ENCODE measurements at regions of chr17 and their contacts with region 1.

Region 1: DNA sequence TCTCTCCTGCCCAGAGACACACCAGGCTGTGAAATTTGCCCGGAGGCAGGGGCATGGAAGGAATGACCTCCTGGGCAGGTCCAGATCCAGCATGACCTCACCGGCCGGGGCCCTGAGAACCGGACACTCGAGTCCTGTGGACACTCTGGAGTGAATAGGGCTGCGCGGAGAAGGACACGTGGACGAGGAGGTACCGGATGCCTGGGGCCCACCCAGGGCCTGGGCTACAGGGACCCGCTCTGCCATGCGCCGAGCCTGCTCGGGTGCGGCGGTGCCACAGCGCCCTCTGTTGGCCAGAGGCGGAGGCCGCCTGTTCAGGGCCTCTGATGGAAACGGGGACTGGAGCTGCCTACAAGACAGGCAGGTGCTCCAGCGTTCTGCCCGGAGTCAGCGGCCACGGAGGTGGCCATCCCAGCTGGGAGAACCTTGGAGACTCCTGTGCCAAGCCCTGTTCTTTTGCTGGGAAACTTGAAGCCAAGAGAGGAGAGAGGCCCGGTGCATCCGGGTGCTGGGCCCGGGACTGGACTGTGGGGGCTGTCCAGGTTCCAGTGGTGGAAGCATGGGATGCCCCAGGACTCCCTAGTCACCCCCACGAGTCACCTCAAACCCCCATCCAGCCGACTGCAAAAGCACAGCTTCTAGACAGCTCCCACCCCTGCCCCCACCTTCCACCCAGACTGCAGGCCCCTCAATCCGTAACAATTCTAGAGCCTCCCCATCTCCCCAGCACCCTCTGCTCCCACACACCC is 19.3 kb upstream of the NXPH3 start:
- DNase-seq: peak; percentile 98
- H3K4me3 ChIP-seq: no peak overlapping the region
- H3K27ac ChIP-seq: no peak overlapping the region
- H3K4me1 ChIP-seq: peaks cover 0 to 8% of the 10 kb centered on the region in 2 experiments; a peak in 1 of 4 replicates
- H3K27me3 ChIP-seq: peaks cover 20% of the 10 kb centered on the region; the same call in 1 of the 2 replicates
- CTCF ChIP-seq: peak; percentile 100
- EP300 ChIP-seq: no peak
- RAD21 ChIP-seq: peak; percentile 99

Region 2: DNA sequence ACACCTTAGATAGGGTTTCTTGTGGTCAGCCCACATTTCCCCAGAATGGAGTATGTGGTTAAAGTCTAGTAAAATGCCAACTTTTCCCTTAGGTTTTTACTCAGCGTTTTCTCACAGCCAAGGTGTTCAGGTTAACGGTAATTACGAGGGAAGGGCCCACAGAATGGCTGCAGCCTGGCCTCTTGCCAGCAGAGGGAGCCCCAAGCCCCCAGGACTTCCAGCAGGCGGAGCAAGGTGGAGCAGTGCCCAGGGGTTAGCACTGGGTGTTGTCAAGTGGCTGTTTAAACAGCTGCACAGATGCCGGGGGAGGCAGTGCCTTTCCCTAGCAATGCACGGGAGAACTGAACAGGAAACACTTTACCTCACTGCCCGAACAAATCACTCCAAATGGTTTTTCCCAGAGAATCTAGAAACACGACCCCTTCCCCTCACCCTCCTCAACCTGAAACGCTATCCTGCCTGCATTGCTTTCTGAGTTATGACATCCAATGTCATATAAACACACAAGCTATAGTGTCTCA is 148.4 kb before region 1 on chr17:
- CTCF ChIA-PET with region 1: interaction called, 496 read pairs
- POLR2A ChIA-PET with region 1: interaction called, 4 read pairs
- DNase-seq: peak; percentile 92
- H3K4me3 ChIP-seq: peak overlapping the region in 1 of 2 experiments; percentile 27; a peak in 1 of 4 replicates
- H3K27ac ChIP-seq: no peak overlapping the region
- H3K4me1 ChIP-seq: peaks cover 0 to 4% of the 10 kb centered on the region in 2 experiments; a peak in 1 of 4 replicates
- H3K27me3 ChIP-seq: no peaks in the 10 kb centered on the region
- CTCF ChIP-seq: peak; percentile 100
- EP300 ChIP-seq: no peak
- RAD21 ChIP-seq: peak; percentile 86

Region 3: DNA sequence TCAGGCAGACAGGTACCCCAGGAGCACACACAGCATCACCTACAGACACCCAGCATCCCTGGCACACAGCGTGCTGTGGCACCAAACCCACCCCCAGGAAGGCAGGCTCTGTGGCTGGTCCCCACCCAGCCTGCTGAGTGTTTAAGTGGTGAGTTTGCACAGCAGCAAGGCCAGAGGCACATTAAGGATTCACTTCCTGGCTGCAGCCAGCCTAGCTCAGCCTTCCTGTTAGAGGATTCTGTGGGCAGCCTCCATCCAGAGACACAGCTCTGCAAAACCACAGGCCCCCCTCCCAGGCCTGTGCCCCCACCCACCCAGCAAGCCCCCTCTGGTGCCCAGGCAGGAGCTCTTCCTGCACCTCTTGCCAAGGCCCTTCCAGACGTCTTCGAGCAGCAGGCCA is 105.7 kb before region 1 on chr17:
- CTCF ChIA-PET with region 1: interaction called, 55 read pairs
- POLR2A ChIA-PET with region 1: no interaction called
- DNase-seq: no peak
- H3K4me3 ChIP-seq: no peak overlapping the region
- H3K27ac ChIP-seq: peak overlapping the region in 1 of 2 experiments; percentile 20; a peak in 1 of 4 replicates
- H3K4me1 ChIP-seq: peaks cover 18 to 19% of the 10 kb centered on the region in 2 experiments; a peak in 3 of 4 replicates
- H3K27me3 ChIP-seq: no peaks in the 10 kb centered on the region; the same call in 1 of the 2 replicates
- CTCF ChIP-seq: no peak
- EP300 ChIP-seq: no peak
- RAD21 ChIP-seq: no peak

Region 4: DNA sequence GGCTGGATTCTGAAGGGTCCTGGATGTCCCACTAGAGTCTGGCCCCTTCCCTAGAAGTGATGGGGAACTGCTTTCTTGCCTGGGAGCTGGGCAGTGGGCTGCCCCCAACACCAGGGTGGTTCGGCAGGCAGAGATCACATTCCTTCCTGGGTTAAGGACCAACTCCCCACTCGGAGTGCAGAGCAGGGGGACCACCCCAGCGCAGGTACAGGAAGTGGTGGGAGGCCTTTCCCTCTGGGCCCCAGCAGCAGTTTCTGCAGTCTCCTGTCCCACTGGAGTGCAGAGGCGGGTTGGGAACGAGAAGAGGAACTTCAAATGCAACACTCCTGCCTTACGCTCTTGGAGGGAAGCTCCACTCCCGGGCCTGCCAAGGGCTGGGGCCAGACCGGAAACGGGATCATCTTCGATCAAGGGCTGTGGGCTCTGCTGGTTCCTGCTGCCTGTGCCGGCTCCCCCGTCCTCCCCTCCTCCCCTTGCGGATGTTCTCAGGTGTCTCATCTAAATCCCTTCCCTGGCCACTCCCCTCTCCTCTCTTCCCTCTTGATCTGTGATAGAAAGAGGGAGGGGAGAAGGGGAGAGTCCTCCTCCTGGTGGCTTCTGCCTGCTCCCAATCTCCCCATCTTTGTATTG is 70.3 kb before region 1 on chr17:
- CTCF ChIA-PET with region 1: interaction called, 499 read pairs
- POLR2A ChIA-PET with region 1: no interaction called
- DNase-seq: no peak
- H3K4me3 ChIP-seq: no peak overlapping the region
- H3K27ac ChIP-seq: no peak overlapping the region
- H3K4me1 ChIP-seq: peaks cover 0 to 28% of the 10 kb centered on the region in 2 experiments; a peak in 1 of 4 replicates
- H3K27me3 ChIP-seq: peaks cover 76% of the 10 kb centered on the region
- CTCF ChIP-seq: no peak
- EP300 ChIP-seq: no peak
- RAD21 ChIP-seq: no peak

Region 5: DNA sequence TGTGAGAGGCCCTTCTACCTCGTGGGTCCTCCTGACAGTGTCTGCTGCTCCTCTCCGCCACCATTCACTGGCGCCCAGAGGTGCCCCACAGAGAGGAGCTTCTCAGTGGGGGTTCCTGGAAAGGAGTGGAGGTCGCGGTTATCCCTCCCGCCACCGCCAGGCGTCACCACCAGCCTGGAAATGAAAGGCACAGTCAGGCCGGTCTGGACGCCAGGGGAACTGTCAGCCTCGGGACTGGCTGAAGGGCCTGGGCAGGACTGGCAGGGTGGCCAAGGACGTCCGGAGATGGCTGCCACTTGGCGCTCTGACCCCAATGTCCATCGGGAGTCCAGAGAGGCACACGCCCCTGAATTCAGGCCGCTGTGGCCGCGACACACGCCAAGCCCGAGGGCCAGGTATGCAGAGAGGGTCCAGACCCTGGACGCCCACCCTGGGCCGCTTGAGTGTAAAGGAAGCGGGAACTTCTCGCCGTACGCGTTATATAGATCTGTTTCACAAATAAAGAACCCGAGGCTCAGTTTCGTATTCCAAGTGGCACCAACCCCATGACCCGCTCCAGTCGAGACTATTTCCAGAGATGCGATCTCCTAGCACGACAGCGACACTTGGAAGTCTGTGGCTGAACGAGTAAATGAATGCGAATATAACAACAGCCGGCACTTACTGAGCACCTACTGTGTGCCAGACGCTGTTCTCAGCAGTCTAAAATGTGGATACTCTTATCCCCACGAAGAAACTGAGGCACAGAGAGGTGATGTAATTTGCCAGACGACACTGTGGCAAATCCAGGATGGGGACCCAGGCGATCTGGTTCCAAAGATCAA is 11.7 kb after region 1 on chr17:
- CTCF ChIA-PET with region 1: interaction called, 131 read pairs
- POLR2A ChIA-PET with region 1: no interaction called
- DNase-seq: peak; percentile 92
- H3K4me3 ChIP-seq: peak overlapping the region; percentile 40 to 56
- H3K27ac ChIP-seq: no peak overlapping the region
- H3K4me1 ChIP-seq: peaks cover 0 to 14% of the 10 kb centered on the region in 2 experiments; a peak in 1 of 4 replicates
- H3K27me3 ChIP-seq: peaks cover 61% of the 10 kb centered on the region
- CTCF ChIP-seq: peak; percentile 99
- EP300 ChIP-seq: no peak
- RAD21 ChIP-seq: peak; percentile 99

Region 6: DNA sequence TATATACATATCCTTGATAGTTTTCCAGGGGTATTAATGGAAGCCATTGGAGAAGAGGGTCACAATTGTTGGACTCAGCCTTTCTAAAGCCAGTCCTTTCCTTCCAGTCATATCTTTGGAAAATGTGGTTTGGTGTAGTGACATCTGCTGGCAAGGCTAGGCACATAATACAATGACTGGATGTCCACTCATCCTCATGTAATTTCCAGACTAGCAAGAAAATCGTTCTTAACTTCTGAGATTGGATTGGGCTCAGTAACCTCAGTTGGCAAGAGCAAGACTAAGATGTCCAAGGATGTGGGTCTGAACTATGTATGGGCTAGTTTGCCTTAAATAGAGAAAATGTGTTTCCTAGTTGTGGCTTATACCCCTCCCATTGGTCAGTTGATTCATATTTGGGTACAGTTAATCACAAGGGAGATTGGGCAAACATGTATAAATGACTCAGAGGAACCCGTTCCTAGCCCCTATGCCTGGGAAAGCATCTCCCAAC is 223.4 kb after region 1 on chr17:
- CTCF ChIA-PET with region 1: interaction called, 12 read pairs
- POLR2A ChIA-PET with region 1: no interaction called
- DNase-seq: peak; percentile 40
- H3K4me3 ChIP-seq: no peak overlapping the region
- H3K27ac ChIP-seq: 0 out of 4 replicates have a peak overlapping the region, but pooled peaks of 1 of the 2 experiments have one; percentile 3
- H3K4me1 ChIP-seq: no peaks in the 10 kb centered on the region; a peak in 1 of 4 replicates
- H3K27me3 ChIP-seq: peaks cover 8% of the 10 kb centered on the region; the same call in 1 of the 2 replicates
- CTCF ChIP-seq: peak; percentile 74
- EP300 ChIP-seq: no peak
- RAD21 ChIP-seq: peak; percentile 71

Region 7: GRCh38 chr17:50177983-50178834 is 621.8 kb after region 1 on chr17:
- CTCF ChIA-PET with region 1: no interaction called
- POLR2A ChIA-PET with region 1: no interaction called
- DNase-seq: peak; percentile 93
- H3K4me3 ChIP-seq: peak overlapping the region in 1 of 2 experiments; percentile 15; a peak in 1 of 4 replicates
- H3K27ac ChIP-seq: peak overlapping the region; percentile 94 to 100
- H3K4me1 ChIP-seq: peaks cover 29 to 52% of the 10 kb centered on the region in 2 experiments; a peak in 3 of 4 replicates
- H3K27me3 ChIP-seq: no peaks in the 10 kb centered on the region
- CTCF ChIP-seq: peak; percentile 77
- EP300 ChIP-seq: peak; percentile 27 to 36; a peak in 2 of 4 replicates
- RAD21 ChIP-seq: peak; percentile 53

Measured in SK-N-SH (cell line).